RWPE1 (cell line): ENCODE measurements at regions of chr2 and their contacts with region 1.

Region 1: DNA sequence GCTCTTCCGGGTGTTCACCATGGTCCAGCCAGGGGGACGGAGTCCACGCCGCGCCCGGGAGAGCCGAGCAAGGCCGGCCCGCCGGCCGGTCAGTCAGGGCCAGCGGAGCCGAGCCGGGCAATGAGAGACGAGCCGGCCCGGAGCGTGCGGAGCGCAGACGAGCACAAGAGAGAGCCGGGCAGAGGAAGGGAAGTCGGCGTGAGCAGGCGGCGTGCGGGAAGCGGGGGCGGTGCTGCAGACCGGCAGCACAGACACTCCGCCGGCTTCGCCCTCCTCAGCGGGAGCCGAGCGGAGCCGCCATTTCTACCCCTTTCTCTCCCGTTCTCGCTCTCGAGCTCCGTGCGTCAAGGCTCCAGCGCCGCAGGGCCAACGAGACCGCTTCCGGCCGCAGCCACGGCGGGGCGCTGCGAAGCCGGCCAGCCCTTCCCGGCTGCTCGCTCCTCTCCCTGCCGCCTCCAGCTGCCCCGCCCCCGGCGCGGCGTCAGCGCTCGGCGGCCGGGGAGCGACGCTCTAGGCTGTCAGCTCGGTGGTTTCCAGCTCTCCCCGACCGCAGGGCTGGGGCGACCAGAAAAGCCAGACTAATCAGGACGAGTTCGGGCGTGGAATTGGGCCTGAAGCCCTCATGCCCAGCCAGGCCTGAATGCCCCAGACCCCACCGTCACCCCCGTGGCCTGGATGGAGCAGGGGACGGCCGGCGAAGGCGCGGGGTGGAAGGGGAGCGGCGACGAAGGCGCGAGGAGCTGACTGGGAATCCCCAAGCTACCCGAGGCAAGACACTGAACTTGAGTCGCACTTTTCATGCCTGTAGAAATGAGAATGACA is at the start of gene ATAD2B:
- DNase-seq: peak; percentile 95
- H3K27ac ChIP-seq: peak within 1 kb of the TSS; percentile 92
- CTCF ChIP-seq: peak; percentile 94

Region 2: GRCh38 chr2:23824777-23825212 is 102.2 kb before region 1 on chr2:
- CTCF ChIA-PET with region 1: interaction called, 10 read pairs
- POLR2A ChIA-PET with region 1: no interaction called
- DNase-seq: peak; percentile 43
- H3K27ac ChIP-seq: no peak overlapping the region
- CTCF ChIP-seq: peak; percentile 70

Region 3: DNA sequence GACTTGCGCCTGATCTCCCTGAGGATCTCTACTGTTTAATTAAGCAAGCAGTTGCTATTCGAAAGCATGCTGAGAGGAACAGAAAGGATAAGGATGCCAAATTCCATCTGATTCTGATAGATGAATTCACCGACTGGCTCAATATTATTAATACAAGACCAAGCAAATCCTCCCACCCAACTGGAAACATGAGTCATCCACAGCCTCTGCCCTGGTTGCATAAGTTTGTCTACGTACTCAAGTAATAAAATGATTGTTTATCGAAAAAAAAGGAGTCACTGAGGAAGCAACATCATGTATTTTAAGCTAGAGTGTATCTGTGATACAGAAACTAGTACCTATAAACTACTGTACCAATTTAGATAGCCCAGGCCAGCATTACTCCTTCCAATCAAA is 26.0 kb before region 1 on chr2:
- CTCF ChIA-PET with region 1: interaction called, 11 read pairs
- POLR2A ChIA-PET with region 1: no interaction called
- DNase-seq: peak; percentile 62
- H3K27ac ChIP-seq: peak overlapping the region; percentile 74
- CTCF ChIP-seq: no peak

Region 4: DNA sequence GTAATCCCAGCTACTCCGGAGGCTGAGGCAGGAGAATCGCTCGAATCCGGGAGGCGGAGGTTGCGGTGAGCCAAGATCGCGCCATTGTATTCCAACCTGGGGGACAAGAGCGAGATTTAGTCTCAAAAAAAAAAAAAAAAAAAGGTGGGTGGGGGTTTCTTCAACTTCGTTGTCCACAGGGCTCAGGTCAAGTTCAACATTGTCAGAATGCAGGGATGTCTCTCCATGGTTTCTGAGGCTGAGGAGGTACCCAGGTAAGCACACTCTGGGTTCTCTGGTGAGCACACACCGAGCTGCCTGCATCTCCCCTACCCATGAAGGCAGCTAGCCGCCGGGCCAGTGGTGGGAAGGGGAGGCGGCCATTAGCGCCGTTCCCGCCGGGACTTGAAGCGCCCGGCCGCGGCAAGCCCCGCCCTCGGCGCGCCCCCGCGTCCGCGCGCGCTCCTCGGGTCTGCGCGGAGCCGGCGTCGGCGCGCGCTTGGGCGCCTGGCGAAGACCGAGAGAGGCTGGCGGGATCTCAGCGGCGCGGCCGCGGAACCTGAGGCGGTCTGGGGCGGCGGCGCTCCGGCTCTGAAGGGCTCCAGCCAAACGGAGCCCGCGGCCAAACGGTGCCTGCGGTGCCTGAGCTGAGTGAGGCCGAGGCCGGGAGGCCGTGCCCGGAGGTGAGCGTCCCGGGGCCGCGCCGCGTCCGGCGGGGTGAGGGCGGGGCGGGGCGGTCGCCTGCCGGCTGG is 13.2 kb after region 1 on chr2 and contains the start of gene UBXN2A:
- CTCF ChIA-PET with region 1: interaction called, 4 read pairs
- POLR2A ChIA-PET with region 1: interaction called, 36 read pairs
- DNase-seq: peak; percentile 85
- H3K27ac ChIP-seq: peak within 1 kb of the TSS; percentile 90
- CTCF ChIP-seq: no peak

Region 5: GRCh38 chr2:24084386-24085361 is 157.7 kb after region 1 on chr2 and contains the start of gene TP53I3:
- CTCF ChIA-PET with region 1: interaction called, 9 read pairs
- POLR2A ChIA-PET with region 1: interaction called, 12 read pairs
- DNase-seq: peak; percentile 78
- H3K27ac ChIP-seq: peak within 1 kb of the TSS; percentile 97
- CTCF ChIP-seq: peak; percentile 96